Adrenal gland (tissue), 19 donors: ENCODE measurements at regions of chr11 and their contacts with region 1.

Region 1: DNA sequence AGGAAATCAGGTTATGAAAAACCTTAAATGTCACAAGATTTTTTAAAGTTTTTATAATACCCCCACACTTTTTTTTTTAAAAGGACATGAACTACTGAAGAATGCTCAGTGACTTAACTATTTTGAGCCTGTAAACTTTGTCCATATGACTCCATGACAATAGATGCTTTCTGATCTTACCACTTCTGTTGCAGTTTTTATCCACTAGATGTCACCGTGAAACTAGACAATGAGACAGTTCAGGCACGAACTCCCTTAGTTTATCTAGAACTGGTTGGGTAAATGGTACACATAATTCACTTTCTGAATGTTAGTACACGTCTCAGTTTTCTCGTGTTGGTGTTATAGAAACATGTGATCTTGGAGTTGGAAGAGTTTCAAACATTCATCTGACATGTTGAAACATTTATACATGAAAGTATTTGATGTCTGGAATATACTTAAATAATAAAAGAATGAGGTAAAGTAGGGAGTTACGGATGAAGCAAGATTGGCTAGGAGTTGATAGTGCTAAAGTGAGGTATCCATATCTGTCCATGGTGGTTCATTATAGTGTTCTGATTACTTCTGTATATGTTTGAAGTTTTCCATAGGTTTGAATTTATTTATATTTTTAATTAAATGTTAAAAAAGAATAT is 8.1 kb downstream of the CCDC15 start:
- DNase-seq: peak in 2 of 7 donors; percentile 6 to 18
- H3K4me3 ChIP-seq: no peak overlapping the region
- H3K27ac ChIP-seq: no peak overlapping the region
- H3K4me1 ChIP-seq: no peaks in the 10 kb centered on the region
- H3K27me3 ChIP-seq: no peaks in the 10 kb centered on the region
- CTCF ChIP-seq: peak; percentile 35 to 93 (median 84)
- POLR2A ChIP-seq: no peak

Region 2: GRCh38 chr11:124865921-124866583 is 96.0 kb before region 1 on chr11:
- intact Hi-C with region 1: no loop called
- DNase-seq: peak in 2 of 7 donors; percentile 40 to 43
- H3K4me3 ChIP-seq: peak overlapping the region in 1 of 4 donors; percentile 43
- H3K27ac ChIP-seq: no peak overlapping the region
- H3K4me1 ChIP-seq: peaks cover 15 to 21% of the 10 kb centered on the region in 2 donors
- H3K27me3 ChIP-seq: peaks cover 79% of the 10 kb centered on the region
- CTCF ChIP-seq: peak; percentile 49 to 75 (median 62)
- POLR2A ChIP-seq: no peak

Region 3: GRCh38 chr11:125141686-125142535 is 179.8 kb after region 1 on chr11:
- intact Hi-C with region 1: loop called (anchors 5 to 10 kb)
- DNase-seq: peak in 6 of 7 donors; percentile 45 to 65 (median 51)
- H3K4me3 ChIP-seq: no peak overlapping the region
- H3K27ac ChIP-seq: no peak overlapping the region
- H3K4me1 ChIP-seq: peaks cover 0 to 10% of the 10 kb centered on the region in 2 donors
- H3K27me3 ChIP-seq: no peaks in the 10 kb centered on the region
- CTCF ChIP-seq: peak; percentile 86 to 98 (median 96)
- POLR2A ChIP-seq: no peak

Region 4: DNA sequence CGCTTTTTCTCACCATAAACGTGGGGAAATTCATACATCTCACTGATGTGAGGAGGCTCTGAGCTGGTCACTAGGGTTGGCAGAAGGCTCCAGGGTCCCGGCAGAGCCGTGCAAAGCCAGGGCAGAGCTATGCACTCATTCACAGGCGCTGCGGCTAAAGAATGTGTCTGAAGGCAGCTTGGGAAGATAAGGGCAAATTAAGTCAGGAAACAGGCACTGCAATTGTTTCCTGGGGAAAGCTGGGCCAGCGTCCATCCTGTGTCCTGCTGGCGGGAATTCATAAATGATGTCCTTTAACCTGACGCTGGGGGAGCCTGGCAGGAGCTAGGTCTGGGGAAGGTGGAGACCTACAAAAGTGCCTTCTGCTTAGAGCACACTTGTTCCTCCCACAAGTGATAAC is 230.1 kb after region 1 on chr11:
- intact Hi-C with region 1: no loop called
- DNase-seq: peak in 5 of 7 donors; percentile 12 to 60 (median 31)
- H3K4me3 ChIP-seq: no peak overlapping the region
- H3K27ac ChIP-seq: no peak overlapping the region
- H3K4me1 ChIP-seq: no peaks in the 10 kb centered on the region
- H3K27me3 ChIP-seq: no peaks in the 10 kb centered on the region
- CTCF ChIP-seq: peak in 1 of 6 experiments; percentile 14
- POLR2A ChIP-seq: no peak

Region 5: DNA sequence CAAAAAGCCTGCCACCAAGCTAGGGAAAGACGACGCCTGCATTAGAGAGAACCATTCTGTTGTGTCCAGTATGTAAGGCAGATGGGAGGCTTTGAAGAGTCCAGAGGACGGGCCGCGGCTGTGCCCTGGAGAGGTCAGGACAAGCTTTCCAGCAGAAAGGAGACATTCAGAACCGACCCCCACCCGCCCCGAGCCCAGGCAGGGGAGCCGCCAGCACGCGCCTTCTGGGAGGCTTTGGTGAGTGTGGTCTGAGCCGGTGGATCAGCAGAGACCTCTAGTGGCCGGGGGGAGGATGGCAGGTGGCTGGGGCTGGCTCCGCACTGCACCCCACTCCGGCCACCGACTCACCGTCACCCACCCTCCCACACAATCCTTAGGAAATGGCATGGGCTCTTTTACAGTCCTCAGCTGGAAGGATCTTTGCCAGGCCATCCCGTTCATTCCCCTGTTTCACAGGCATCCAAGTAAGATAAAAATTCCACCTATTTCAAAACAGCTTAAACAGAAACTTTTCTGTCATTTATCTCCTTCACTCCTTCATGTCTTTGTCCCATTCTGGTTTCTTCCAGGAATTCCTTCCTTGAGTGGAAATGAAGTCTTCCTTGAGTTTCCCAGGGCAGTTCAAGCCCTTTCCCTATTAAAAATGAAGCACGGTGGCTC is 442.8 kb after region 1 on chr11:
- intact Hi-C with region 1: loop called in 1 of 2 experiments (anchors 10 kb)
- DNase-seq: peak; percentile 56 to 84 (median 70)
- H3K4me3 ChIP-seq: no peak overlapping the region
- H3K27ac ChIP-seq: no peak overlapping the region
- H3K4me1 ChIP-seq: peaks cover 0 to 7% of the 10 kb centered on the region in 2 donors
- H3K27me3 ChIP-seq: peaks cover 5% of the 10 kb centered on the region
- CTCF ChIP-seq: peak; percentile 70 to 97 (median 89)
- POLR2A ChIP-seq: no peak